ENCODE measurements at regions of chr5 and their contacts with region 1.

Region 1: DNA sequence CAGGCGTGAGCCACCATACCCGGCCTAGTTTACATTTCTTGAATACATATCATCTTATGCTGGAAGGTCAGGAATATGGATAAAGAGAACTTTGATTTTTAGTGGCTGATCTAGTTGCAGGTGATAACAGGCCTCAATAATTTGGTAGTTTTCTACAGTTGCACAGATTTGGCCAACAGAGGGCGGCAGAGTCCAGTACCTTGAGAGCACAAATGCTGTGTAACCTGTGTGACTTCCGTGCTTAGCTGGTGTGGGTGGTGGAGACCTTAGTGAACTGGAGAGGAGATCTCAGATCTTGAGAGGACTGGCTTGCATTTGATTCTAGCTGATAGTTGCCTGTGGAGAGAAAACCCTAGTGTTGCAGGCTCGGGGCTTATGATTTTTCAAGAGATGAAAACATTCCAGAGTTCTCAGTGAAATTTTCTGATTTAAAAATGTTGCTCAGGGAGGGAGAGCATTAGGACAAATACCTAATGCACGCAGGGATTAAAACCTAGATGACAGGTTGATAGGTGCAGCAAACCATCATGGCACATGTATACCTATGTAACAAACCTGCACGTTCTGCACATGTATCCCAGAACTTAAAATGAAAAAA is 17.4 kb upstream of the GPR151 start:
- DNase-seq: peak; percentile 56
- H3K4me3 ChIP-seq: no peak overlapping the region
- H3K27ac ChIP-seq: no peak overlapping the region
- H3K27me3 ChIP-seq: no peaks in the 10 kb centered on the region
- CTCF ChIP-seq: peak; percentile 93

Region 2: DNA sequence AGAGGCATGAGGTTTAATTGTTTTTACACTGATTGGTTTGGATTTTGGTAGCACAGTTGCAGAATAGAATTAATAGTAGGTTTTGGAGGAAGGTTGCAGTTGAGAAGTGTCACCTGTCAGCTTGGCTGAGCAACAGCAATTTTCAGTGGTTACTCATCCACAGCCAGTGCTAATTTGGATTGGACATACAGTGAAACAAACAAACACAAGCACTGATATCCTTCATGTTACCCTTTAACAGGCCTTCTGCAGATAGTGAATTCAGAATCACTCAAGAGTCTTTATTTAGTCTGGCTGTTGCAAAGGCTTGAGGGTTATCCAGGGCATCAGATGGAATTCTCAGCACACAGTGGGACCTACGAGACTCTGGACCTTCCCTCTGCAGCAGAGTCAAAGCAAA is 226.5 kb before region 1 on chr5:
- in situ Hi-C with region 1: no loop called
- DNase-seq: no peak
- H3K4me3 ChIP-seq: no peak overlapping the region
- H3K27ac ChIP-seq: no peak overlapping the region
- H3K27me3 ChIP-seq: no peaks in the 10 kb centered on the region
- CTCF ChIP-seq: no peak

Region 3: DNA sequence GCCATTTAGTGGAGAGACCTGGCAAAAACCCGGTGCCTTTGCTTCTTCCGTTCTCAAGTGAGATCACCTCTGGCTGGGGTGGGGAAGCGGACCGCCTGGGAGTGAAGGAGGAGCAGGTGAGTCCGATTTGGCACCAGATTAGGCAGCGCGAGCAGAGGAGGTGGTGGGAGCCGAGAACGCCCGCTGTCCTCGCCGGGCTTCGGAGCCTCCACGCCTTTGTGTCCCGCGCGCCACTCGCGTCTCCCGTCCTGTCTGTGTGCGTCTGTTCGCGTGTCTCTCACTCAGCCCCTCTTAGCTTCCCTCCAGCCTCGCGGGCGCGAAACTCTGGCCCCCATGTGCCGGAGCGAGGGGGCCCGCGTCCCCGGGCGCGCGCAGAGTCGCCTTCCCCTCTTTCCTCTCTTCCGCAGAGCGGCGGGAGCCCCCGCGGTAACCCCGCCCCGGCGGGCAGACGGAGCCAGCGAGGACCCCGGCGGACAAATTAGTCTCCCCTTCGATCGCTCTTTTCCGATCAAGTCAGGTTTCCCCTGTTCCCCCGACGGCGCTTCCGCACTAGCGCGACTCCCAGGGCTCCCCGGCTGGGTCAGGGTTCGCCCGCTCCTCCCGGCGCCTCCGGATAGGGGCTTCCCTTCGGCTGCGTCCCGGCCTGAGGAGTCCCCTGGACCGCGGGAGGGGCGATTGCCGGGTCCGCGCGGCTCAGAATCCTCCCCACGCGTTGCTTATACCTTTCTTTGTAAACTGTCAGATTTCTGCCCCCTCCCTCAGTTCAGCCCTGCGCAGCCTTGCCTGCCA is 187.6 kb before region 1 on chr5:
- in situ Hi-C with region 1: no loop called
- DNase-seq: no peak
- H3K4me3 ChIP-seq: no peak overlapping the region
- H3K27ac ChIP-seq: no peak overlapping the region
- H3K27me3 ChIP-seq: peaks cover 70% of the 10 kb centered on the region
- CTCF ChIP-seq: no peak

Region 4: DNA sequence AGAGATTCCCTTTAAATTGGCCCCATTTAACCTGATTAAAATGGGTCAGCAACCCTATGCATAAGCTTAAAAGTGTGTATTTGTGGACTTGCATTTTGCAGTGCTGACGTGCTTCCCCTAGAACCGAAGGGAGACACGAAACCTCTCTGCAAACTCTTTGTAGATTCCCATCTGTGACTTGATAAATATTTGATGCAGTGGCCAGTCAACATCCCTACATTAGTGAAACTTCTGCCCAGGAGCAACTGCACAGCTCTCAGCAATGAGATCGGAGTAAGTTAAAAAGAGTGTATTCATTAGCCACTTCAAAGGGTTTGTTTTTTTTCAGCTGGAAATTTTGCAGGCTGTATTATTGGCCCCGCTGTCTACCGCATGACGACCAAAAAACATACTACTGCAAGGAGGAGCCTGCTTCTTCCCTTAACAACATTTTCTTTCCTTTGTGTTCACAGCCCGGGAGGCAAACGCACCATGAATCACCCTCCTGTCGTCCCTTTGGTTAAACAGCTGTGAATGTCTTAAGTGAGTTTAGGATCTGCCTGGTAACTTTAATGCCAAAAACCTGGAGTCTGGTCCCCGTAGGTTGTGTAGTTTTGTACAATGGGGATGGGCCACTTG is 124.2 kb before region 1 on chr5:
- in situ Hi-C with region 1: no loop called
- DNase-seq: peak; percentile 35
- H3K4me3 ChIP-seq: peak overlapping the region; percentile 31
- H3K27ac ChIP-seq: no peak overlapping the region
- H3K27me3 ChIP-seq: no peaks in the 10 kb centered on the region
- CTCF ChIP-seq: no peak

Region 5: DNA sequence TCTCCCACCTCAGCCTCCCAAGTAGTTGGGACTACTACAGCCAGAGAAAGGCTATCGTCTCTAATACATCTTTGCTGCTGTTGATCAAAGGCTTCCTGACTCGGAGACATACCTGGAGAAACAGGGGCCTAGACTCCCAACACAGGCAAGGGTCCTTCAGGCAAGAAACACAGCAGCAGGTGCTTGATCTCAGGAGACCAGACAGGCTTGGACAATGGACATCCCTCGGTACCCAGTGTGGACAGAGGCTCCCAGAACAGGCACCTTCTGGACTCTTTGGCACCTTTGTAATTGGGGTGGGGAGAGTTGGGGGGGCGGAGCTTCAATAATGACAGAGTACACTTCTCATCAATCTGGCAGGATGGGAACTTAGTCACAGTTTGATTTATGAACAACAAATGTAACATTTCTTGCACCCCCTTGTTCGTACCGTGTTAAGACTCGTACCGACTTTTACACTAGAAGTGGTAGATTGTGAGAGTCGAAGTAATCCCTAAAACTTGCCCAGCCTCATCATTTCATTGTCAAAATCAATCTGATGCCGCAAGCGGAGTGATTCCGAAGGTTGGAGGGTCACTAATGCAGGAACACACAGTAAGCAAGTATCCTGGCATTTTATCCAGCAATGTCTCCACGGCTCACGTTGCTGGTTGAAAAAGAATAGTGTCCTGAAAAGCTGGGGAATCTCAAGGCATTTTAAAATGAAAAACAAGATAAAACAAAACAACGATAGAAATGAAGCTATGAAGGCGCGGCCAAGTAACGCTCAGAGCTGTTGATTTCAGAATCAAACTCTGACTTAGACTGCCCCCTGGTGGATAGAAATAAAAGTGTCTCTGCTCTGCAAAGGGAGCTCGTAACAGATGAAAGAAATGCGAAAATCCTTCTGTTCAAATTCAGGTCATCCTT is 655.1 kb after region 1 on chr5:
- in situ Hi-C with region 1: loop called (anchors 25 kb)
- DNase-seq: peak; percentile 60
- H3K4me3 ChIP-seq: no peak overlapping the region
- H3K27ac ChIP-seq: no peak overlapping the region
- H3K27me3 ChIP-seq: no peaks in the 10 kb centered on the region
- CTCF ChIP-seq: peak; percentile 72

Measured in brain microvascular endothelial cell (primary cell).